ENCODE measurements at regions of chr3 and their contacts with region 1.

Region 1: GRCh38 chr3:128787256-128788240 is 61.6 kb downstream of the RAB7A start:
- DNase-seq: peak; percentile 36
- H3K4me3 ChIP-seq: no peak overlapping the region
- H3K27ac ChIP-seq: no peak overlapping the region
- H3K4me1 ChIP-seq: peaks cover 22 to 72% (median 33%) of the 10 kb centered on the region in 4 donors
- H3K27me3 ChIP-seq: no peaks in the 10 kb centered on the region
- CTCF ChIP-seq: peak in 4 of 5 experiments; percentile 27 to 48 (median 32)
- EP300 ChIP-seq: no peak
- POLR2A ChIP-seq: no peak

Region 2: GRCh38 chr3:128725932-128726690 is 61.4 kb before region 1 on chr3 and contains the start of gene RAB7A:
- in situ Hi-C with region 1: no loop called
- intact Hi-C with region 1: loop called (anchors 10 kb)
- DNase-seq: peak; percentile 98
- H3K4me3 ChIP-seq: peak within 1 kb of the TSS; percentile 82 to 99 (median 88)
- H3K27ac ChIP-seq: peak within 1 kb of the TSS; percentile 92 to 99 (median 94)
- H3K4me1 ChIP-seq: peaks cover 12 to 41% (median 27%) of the 10 kb centered on the region in 4 donors
- H3K27me3 ChIP-seq: no peaks in the 10 kb centered on the region
- CTCF ChIP-seq: no peak
- EP300 ChIP-seq: peak; percentile 83
- POLR2A ChIP-seq: peak; percentile 94
- total RNA-seq, gene RAB7A: 45.0 to 121 (median 101) TPM

Measured in transverse colon (tissue), 4 donors.